ENCODE measurements at regions of chr12 and their contacts with region 1.

Region 1: DNA sequence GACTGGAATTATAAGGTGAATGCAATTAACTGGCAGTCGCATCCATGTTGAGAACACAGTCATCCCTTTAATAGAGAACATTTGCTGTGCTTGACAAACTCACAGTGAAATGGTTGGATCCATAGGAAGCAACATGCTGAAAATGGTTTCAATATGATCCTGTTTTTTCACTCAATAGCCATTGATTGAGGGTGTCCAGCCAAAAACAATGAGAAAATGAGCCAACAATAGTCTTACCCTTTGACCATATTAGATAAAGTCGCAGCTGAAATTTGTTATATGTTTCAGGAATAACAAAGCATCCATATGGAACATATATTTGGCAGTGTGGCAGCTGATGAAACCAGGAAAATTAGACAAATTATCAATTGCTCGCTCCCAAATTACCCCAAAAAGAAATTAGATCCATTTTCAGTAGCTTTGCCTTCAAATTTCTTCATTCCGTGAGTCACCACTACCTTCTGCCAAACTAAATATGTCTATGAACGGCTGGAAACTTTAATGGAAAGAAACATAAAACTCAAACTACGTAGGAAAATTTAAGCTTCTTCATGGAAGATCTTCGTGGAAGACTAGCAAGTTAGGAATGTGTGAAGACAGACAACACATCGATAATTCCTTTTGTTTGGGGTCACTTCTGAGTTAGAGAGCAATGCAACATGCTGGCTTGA is 17.4 kb downstream of the IGF1 start:
- DNase-seq: no peak
- H3K4me3 ChIP-seq: peak overlapping the region in 1 of 2 donors; percentile 20
- H3K27ac ChIP-seq: peak overlapping the region; percentile 60 to 66
- H3K4me1 ChIP-seq: peaks cover 0 to 4% of the 10 kb centered on the region in 2 donors
- H3K27me3 ChIP-seq: no peaks in the 10 kb centered on the region
- CTCF ChIP-seq: no peak

Region 2: GRCh38 chr12:102427543-102427941 is 35.4 kb before region 1 on chr12:
- intact Hi-C with region 1: loop called (anchors 5 kb)
- DNase-seq: no peak
- H3K4me3 ChIP-seq: peak overlapping the region; percentile 3 to 4
- H3K27ac ChIP-seq: peak overlapping the region; percentile 47 to 73
- H3K4me1 ChIP-seq: peaks cover 0 to 8% of the 10 kb centered on the region in 2 donors
- H3K27me3 ChIP-seq: no peaks in the 10 kb centered on the region
- CTCF ChIP-seq: no peak

Region 3: GRCh38 chr12:102548543-102548942 is 85.6 kb after region 1 on chr12:
- intact Hi-C with region 1: no loop called
- DNase-seq: no peak
- H3K4me3 ChIP-seq: no peak overlapping the region
- H3K27ac ChIP-seq: no peak overlapping the region
- H3K4me1 ChIP-seq: no peaks in the 10 kb centered on the region
- H3K27me3 ChIP-seq: no peaks in the 10 kb centered on the region
- CTCF ChIP-seq: no peak